ENCODE measurements at regions of chr5 and their contacts with region 1.

Region 1: DNA sequence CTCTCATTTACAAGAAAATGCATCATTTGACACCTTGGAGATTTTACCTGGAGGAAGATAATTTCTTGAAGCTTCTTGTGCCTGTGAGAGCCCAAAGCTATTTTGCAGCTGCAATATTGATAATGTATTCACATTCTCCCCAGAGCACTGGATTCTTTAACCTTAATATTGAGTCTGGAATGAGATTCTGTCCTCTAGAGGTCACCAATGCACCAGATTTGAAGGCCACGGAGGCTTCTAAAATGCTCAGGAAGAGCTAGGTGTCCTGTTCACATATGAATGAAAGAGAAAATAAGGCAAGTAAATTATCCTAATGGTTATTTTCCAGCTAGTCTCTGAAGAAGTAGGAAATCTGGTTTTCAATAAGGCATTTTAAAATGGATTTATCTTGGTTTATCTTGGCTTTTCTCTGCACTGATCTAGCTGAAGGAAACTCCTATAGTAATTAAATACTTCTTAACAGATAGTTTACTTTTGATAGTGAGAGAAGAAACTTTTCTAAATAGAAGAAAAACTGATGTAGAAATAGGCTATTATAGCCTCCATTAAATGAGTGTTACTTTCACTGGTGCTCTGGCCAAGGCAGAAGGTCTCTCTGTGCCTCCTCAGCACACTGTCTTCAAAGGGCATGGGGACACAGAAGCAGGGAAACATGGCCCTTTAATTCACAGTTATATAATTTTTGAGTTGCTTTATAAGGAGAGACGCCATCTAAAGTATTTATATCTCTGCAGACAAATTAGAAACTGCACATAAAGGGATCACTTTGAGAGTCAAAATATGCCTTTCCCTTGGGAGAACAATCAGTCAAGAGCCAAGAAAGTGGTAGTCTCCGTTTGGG is 297.0 kb upstream of the ACTBL2 start:
- DNase-seq: no peak
- ATAC-seq: peak; percentile 31
- H3K4me3 Mint-ChIP-seq: no peak overlapping the region
- H3K27ac Mint-ChIP-seq: no peak overlapping the region
- H3K4me1 Mint-ChIP-seq: no peaks in the 10 kb centered on the region
- H3K27me3 Mint-ChIP-seq: peaks cover 2% of the 10 kb centered on the region
- CTCF ChIP-seq: no peak

Region 2: GRCh38 chr5:57745700-57746651 is 33.6 kb before region 1 on chr5:
- CTCF ChIA-PET with region 1: no interaction called
- POLR2A ChIA-PET with region 1: no interaction called
- intact Hi-C with region 1: no loop called
- DNase-seq: no peak
- ATAC-seq: no peak
- H3K4me3 Mint-ChIP-seq: no peak overlapping the region
- H3K27ac Mint-ChIP-seq: no peak overlapping the region
- H3K4me1 Mint-ChIP-seq: no peaks in the 10 kb centered on the region
- H3K27me3 Mint-ChIP-seq: peaks cover 4% of the 10 kb centered on the region
- CTCF ChIP-seq: no peak

Region 3: DNA sequence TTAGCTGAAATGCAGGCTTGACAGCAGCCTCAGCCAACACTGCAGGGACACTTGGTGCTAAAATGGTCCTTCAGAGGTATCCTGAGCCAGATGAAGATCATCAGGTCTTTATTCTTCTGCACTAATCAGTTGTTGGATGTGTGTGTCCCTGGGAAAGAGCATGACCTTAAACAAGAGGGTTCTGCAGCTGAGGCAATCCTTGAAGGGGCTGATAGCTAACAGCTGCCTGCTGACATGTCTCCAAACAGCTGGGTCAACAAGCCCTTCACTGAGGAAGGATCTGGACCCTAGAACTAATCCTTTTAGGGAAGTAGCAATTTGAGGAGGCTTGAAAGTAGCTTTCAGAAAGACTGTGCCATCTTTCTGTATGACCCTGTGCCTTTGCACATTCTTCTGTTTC is 79.3 kb after region 1 on chr5:
- CTCF ChIA-PET with region 1: no interaction called
- POLR2A ChIA-PET with region 1: no interaction called
- intact Hi-C with region 1: no loop called
- DNase-seq: no peak
- ATAC-seq: no peak
- H3K4me3 Mint-ChIP-seq: no peak overlapping the region
- H3K27ac Mint-ChIP-seq: no peak overlapping the region
- H3K4me1 Mint-ChIP-seq: no peaks in the 10 kb centered on the region
- H3K27me3 Mint-ChIP-seq: no peaks in the 10 kb centered on the region
- CTCF ChIP-seq: no peak

Region 4: DNA sequence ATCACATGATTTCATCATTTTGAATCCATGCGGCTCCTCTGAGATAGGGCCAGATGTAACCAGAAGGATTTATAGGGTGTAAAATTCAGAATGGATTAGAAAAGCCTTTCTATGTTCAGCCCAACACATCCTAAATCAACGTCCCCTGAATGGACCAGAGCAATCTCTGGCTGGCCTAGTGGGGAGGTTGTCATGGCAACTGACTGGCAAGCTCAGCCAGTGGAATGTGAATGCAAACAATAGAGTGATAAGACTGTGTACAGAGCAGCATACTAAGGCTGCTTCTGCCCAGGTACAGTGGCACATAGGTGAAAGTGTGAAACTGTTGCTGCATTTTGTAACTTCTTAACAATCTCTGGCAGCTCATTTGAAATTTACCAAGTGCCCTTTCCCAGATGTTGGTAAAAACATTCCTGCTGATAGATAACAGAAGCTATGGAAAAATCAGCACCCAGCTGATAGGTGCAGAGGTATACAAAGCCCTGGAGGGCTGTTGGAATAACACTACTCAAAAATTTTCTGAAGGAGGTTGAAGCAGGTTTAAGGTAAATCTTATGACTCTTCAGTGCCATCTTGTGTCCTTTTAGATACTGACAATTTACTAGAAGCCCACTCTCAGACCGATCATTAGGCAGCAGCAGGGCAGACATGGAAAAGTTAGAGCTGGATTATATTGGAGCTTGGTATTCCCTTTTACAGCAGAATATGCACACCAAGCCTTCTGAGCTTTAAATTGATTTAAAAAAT is 1070.5 kb after region 1 on chr5:
- CTCF ChIA-PET with region 1: interaction called, 7 read pairs
- POLR2A ChIA-PET with region 1: no interaction called
- intact Hi-C with region 1: loop called (anchors 1 kb)
- DNase-seq: no peak
- ATAC-seq: peak; percentile 64
- H3K4me3 Mint-ChIP-seq: no peak overlapping the region
- H3K27ac Mint-ChIP-seq: no peak overlapping the region
- H3K4me1 Mint-ChIP-seq: peaks cover 2% of the 10 kb centered on the region
- H3K27me3 Mint-ChIP-seq: no peaks in the 10 kb centered on the region
- CTCF ChIP-seq: peak; percentile 76

Measured in activated B cell treated with CpG ODN at 0.5 μM for 24 hours (primary cell).